Dendritic cell treated with granulocyte-macrophage colony-stimulating factor and Interleukin-4, amounts not matched to agents 40 ng/mL and 50 ng/mL, for 4 days (primary cell): ENCODE measurements at regions of chr1 and their contacts with region 1.

Region 1: DNA sequence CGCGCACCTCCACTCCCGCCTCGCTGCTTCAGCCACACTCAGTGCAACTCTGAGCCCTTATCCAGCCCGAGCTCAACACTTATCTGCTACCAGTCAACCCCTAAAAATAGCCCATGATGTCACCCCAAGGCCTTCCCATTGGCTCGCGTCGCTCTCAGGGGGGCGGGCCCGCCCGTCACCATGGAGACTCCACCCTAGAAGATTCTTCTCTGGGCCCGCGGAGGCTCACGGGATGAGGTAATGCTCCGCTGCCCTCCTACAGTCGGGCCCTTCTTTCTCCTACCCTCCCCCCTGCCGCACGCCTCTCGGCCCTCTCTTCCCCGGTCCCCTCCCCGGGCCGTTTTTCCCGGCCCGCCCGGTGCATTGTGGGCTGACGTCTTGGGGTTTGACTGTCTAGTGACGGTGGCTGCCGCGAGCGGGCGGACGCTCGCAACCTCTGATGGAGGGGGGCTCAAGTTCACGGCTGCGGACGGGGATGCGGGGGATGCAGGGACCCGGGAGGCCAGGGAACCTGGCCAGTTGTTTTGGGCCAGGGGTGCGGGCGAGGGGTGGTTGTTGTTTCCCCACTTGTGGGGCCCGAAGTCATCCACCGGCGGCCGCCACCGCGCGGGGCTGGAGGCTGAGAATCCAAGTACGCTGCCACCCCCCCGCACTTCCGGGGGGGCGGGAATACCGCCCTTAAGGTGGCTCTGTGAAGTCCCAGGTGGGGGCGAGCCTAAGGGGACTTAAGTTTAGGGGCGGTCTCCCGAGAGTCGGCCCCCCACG is at the start of gene JUN:
- H3K4me3 Mint-ChIP-seq: peak within 1 kb of the TSS; percentile 99
- H3K27ac Mint-ChIP-seq: peak within 1 kb of the TSS; percentile 97
- H3K4me1 Mint-ChIP-seq: peaks cover 21% of the 10 kb centered on the region
- H3K27me3 Mint-ChIP-seq: peaks cover 9% of the 10 kb centered on the region

Region 2: DNA sequence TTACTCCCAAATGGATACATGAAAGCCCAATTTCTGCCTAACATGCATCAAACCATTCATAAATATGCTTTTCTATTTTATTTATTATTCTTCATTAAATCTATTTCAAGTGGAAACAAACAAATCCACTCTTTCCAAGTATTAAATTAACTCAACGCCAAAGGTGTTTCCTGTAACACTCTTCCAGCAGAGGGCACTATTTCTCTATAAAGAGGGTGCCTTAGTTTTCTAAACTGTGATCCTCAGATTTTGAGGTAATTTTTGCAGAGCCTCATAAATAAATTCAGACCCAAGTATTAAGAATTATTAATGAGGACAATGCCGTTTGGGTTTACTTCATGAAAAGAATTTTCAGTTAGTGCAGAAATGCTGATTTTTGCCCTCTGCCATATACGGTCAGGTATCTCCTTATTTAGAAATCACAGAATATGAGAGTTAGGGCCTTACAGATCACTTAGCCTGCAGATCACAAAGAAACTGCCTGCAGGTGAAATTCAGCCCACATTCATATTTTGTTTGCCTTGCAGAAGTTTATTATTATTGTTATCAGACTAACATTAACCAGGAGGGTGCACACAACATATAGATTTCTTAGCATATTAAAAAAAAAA is 44.2 kb before region 1 on chr1:
- intact Hi-C with region 1: loop called (anchors 5 kb)
- H3K4me3 Mint-ChIP-seq: no peak overlapping the region
- H3K27ac Mint-ChIP-seq: no peak overlapping the region
- H3K4me1 Mint-ChIP-seq: peaks cover 33% of the 10 kb centered on the region
- H3K27me3 Mint-ChIP-seq: no peaks in the 10 kb centered on the region

Region 3: DNA sequence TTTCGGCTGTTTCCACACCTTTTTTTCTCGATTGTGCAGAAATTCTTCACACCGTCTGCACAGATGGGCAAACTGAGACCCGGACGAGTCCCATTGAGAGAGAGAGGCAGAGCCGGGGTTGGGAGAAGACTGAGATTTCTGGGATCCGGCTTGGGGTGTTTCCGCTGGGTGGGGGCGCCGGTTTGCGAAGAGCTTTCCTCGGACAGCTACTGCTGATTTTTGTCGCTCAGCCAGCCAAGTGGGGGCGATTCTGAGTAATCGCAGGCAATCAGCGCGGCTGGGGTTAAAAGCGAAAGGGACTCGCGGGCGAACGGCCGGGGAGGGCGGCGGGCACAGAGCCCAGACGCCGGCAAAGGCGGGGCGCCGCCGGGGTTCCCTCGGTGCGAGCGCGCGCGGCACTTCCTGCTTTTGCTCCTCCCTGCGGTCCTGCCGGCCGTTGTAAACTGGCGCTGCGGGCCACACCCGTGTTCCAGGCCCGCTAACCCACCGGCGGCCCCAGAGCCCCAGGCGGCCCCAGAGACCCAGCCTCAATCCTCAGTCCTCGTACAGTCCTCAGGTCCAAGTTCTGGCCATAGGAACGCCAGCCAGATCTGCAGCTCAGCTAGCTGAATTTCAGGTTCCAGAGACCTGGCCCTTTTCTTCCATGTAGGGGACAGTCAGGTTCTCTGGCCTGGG is 32.0 kb after region 1 on chr1:
- intact Hi-C with region 1: loop called (anchors 2 kb)
- H3K4me3 Mint-ChIP-seq: peak overlapping the region; percentile 85
- H3K27ac Mint-ChIP-seq: peak overlapping the region; percentile 92
- H3K4me1 Mint-ChIP-seq: peaks cover 75% of the 10 kb centered on the region
- H3K27me3 Mint-ChIP-seq: no peaks in the 10 kb centered on the region

Region 4: DNA sequence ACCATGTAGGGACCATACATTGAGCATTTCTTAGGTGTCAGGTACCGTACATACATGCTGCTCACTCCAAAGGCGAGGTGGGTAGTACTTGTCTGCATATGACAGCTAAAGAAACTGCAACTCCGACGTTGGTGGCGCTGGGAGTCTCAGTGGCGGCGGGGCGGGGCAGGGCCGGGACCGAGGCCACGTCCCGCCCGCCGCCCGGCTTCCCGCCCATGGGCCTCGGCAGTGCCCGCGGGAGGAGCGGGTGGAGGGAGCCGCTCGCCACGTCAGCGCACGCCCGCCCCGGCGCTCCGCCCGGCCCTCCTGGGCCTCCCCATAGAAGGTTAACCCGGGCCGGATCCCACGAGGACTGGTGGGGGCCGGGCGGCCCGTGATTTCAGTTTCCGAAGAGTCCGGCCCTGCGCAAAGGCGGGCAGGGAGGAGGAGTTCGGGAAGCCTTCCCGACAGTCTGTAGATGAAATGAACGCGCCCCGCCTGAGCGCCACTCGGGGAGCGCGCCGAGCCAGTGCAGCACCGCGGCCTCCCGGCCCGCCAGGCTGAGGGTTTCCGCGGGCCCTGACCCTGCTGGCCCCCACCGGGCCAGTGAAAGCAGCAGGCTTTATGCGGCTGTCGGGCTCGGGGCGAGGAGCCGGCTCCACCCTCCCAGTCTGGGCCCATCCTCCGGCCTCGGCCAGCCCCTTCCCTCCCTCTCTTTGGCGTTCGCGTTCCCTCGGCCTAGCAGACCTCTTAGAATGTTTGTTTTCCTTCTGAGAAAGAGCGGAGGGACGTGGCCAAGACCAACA is 119.5 kb after region 1 on chr1:
- intact Hi-C with region 1: loop called (anchors 5 kb)
- H3K4me3 Mint-ChIP-seq: peak overlapping the region; percentile 75
- H3K27ac Mint-ChIP-seq: peak overlapping the region; percentile 95
- H3K4me1 Mint-ChIP-seq: peaks cover 69% of the 10 kb centered on the region
- H3K27me3 Mint-ChIP-seq: no peaks in the 10 kb centered on the region

Region 5: DNA sequence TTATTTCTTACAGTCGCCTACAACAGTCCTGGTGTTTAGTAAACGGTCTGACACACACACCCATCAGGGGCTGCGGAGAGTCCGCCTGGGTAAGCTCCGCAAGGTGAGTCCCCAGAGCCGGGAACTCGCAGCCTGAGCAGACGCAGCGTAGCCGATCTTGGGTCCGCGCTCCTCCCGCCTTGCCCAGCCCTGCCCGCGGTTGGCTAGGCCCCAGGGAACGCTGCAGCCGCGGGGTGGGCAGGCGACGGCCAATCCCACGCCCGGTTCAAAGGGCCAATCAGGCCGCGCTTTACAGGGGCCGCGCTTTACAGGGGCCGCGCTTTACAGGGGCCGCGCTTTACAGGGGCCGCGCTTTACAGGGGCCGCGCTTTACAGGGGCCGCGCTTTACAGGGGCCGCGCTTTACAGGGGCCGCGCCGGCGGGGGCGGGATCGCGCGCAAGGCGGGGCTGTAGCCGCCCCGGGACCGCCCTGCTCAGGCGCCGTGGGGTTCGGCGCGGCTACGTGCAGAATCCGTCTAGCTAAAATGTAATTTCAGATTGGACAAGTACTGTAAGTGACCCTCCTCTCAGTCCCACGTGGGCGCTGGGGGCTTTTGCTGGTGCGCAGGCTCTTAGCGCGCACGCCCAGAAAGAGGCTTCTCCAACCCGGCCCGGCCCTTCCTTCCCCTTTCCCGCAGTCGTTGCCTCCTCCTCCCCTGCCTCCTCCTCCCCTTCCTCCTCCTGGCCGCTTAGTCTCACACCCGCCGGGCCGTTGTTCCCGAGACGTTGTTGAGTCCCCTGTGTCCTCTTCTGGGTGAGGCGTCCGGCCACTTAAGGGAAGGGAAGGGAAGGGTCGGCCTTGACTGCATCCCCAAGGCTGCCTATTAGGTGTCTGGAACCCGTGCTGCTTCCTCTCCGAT is 512.4 kb after region 1 on chr1 and contains the start of gene FGGY:
- intact Hi-C with region 1: loop called (anchors 1 kb)
- H3K4me3 Mint-ChIP-seq: peak within 1 kb of the TSS; percentile 78
- H3K27ac Mint-ChIP-seq: peak within 1 kb of the TSS; percentile 94
- H3K4me1 Mint-ChIP-seq: peaks cover 47% of the 10 kb centered on the region
- H3K27me3 Mint-ChIP-seq: no peaks in the 10 kb centered on the region

Region 6: DNA sequence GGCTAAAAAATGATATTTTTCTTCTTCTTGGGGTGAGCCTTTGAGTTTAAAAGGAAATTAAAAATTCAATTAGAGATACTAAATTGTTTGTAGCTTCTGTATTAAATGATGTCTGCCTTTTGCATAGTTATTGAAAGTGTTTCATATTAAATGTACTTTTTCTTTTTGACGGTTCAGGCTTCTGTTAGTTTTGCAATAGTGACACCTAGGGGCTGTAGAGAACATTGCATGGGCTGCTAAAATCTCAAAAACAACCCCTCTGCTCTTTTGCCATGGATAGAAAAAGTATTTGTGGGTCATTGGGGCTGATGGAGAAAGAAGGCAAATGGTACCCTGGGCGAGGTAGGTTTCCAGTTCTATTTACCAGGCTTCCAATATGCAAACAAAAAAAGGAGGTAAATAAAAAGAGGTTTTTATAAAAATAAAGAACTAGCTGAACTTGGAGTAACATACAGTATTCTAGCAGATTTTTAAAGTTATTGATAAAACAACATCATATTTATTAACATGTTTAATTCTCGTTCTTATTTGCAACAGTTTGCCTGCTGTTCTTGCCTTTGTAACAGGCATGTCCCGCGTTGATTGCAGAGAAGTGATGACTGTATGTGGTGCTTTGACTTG is 915.2 kb after region 1 on chr1:
- intact Hi-C with region 1: loop called (anchors 5 kb)
- H3K4me3 Mint-ChIP-seq: no peak overlapping the region
- H3K27ac Mint-ChIP-seq: no peak overlapping the region
- H3K4me1 Mint-ChIP-seq: peaks cover 40% of the 10 kb centered on the region
- H3K27me3 Mint-ChIP-seq: no peaks in the 10 kb centered on the region